PC-9 (cell line): ENCODE measurements at regions of chr12 and their contacts with region 1.

Region 1: GRCh38 chr12:49366652-49367380 is 446 bp upstream of the SPATS2 start:
- DNase-seq: peak; percentile 81 to 98
- H3K4me3 ChIP-seq: peak overlapping the region; percentile 93
- H3K27ac ChIP-seq: peak overlapping the region; percentile 73
- H3K4me1 ChIP-seq: peaks cover 36% of the 10 kb centered on the region
- H3K27me3 ChIP-seq: no peaks in the 10 kb centered on the region
- CTCF ChIP-seq: no peak; the same call in 1 of the 2 replicates

Region 2: GRCh38 chr12:49219417-49220026 is 147.3 kb before region 1 on chr12:
- CTCF ChIA-PET with region 1: no interaction called
- POLR2A ChIA-PET with region 1: no interaction called
- intact Hi-C with region 1: no loop called
- DNase-seq: no peak
- H3K4me3 ChIP-seq: no peak overlapping the region
- H3K27ac ChIP-seq: no peak overlapping the region
- H3K4me1 ChIP-seq: peaks cover 9% of the 10 kb centered on the region
- H3K27me3 ChIP-seq: no peaks in the 10 kb centered on the region
- CTCF ChIP-seq: no peak

Region 3: GRCh38 chr12:49403971-49404450 is 37.2 kb after region 1 on chr12:
- CTCF ChIA-PET with region 1: no interaction called
- POLR2A ChIA-PET with region 1: interaction called, 21 read pairs
- intact Hi-C with region 1: no loop called
- DNase-seq: no peak
- H3K4me3 ChIP-seq: no peak overlapping the region
- H3K27ac ChIP-seq: no peak overlapping the region
- H3K4me1 ChIP-seq: peaks cover 8% of the 10 kb centered on the region
- H3K27me3 ChIP-seq: no peaks in the 10 kb centered on the region
- CTCF ChIP-seq: no peak

Region 4: DNA sequence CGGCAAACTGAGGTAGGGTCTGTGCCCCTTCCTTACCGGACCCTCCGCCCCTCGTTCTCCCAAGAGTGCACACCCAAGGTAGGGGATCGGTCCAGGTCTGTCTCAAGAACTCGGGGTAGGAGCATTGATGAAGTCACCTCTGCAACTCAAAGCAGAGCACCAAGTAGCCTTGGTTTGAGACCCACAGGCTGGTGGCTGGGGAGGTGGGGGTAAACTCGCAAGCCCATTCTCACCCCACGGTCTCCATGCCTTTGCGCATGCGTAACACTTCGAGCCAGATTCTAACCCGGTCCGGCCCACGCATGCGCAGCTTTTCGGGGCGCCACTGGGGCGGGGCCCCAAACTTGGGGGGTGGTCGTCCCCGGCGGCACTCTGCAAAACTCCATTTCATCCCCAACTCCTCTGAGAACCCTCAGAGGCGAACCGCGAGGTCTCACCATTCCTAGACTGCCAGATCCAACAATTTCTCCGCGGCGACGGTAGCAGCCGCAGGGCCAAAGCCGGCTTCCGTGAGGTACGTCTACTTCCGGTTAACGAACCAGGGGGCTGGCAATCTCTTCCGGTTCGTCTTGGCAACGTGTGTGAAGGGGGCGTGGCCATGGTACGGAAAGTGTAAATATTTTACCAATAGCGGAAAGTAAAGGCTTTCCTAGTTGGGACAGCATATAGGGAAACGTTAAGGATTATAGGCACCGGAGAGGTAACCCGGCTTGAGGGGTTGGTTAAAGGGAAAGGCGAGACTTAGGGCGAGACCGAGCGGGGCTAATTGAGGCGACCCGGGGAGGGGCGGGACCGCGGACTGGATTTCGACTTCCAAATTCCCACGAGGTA is 201.0 kb after region 1 on chr12 and contains the start of gene MCRS1:
- CTCF ChIA-PET with region 1: no interaction called
- POLR2A ChIA-PET with region 1: interaction called, 4 read pairs
- intact Hi-C with region 1: loop called (anchors 5 kb)
- DNase-seq: peak; percentile 83 to 86
- H3K4me3 ChIP-seq: peak within 1 kb of the TSS; percentile 89
- H3K27ac ChIP-seq: peak within 1 kb of the TSS; percentile 57
- H3K4me1 ChIP-seq: peaks cover 13% of the 10 kb centered on the region; the same call in 1 of the 2 replicates
- H3K27me3 ChIP-seq: no peaks in the 10 kb centered on the region
- CTCF ChIP-seq: no peak
- total RNA-seq, gene MCRS1: 66.9 and 71.5 TPM in 2 replicates

Region 5: GRCh38 chr12:50117057-50117622 is 750.3 kb after region 1 on chr12:
- CTCF ChIA-PET with region 1: no interaction called
- POLR2A ChIA-PET with region 1: no interaction called
- intact Hi-C with region 1: no loop called
- DNase-seq: no peak
- H3K4me3 ChIP-seq: no peak overlapping the region
- H3K27ac ChIP-seq: no peak overlapping the region
- H3K4me1 ChIP-seq: peaks cover 11% of the 10 kb centered on the region
- H3K27me3 ChIP-seq: no peaks in the 10 kb centered on the region
- CTCF ChIP-seq: no peak